ENCODE measurements at regions of chr22 and their contacts with region 1.

Region 1: GRCh38 chr22:29394931-29395581 is 6.7 kb upstream of the AP1B1 start:
- DNase-seq: peak; percentile 81
- ATAC-seq: peak; percentile 94
- H3K4me3 Mint-ChIP-seq: no peak overlapping the region
- H3K27ac Mint-ChIP-seq: no peak overlapping the region
- H3K4me1 Mint-ChIP-seq: peaks cover 18% of the 10 kb centered on the region
- H3K27me3 Mint-ChIP-seq: no peaks in the 10 kb centered on the region

Region 2: DNA sequence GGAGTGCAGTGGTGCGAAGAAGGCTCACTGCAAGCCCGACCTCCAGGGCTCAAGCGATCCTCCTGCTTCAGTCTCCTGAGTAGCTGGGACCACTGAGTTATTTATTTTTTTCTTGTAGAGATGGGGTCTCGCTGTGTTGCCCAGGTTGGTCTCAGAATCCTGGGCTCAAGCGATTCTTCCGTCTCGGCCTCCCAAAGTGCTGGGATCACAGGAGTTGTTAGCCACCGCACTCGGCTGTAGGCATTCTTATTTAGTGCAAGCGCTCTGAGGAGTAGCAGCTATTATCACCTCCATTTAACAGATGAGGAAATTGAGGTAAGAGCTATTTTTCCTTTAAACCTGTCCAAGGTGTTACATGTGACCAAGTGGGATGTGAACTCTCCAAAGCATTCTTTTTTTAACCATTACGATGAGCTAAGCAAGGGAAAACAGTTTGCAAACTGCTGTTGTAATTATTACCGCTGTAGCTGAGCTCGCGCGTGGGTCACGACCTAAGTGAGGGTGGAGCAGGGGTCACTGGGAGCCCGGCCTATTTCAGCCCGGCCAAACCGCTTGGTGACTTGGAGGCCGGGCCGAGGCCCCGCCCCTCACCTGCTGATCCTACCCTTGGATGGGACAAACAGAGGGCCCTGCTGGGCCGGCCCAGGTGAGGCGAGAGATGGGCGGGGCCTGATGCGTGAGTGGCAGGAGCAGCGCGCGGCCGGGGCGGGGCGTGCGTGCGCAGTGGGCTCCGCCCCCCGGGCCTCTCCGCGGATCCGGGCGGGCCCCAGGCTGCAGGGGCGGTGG is 322.7 kb before region 1 on chr22:
- CTCF ChIA-PET with region 1: no interaction called
- POLR2A ChIA-PET with region 1: no interaction called
- DNase-seq: peak; percentile 86
- ATAC-seq: peak; percentile 96
- H3K4me3 Mint-ChIP-seq: peak overlapping the region; percentile 48
- H3K27ac Mint-ChIP-seq: no peak overlapping the region
- H3K4me1 Mint-ChIP-seq: peaks cover 19% of the 10 kb centered on the region
- H3K27me3 Mint-ChIP-seq: peaks cover 70% of the 10 kb centered on the region

Region 3: GRCh38 chr22:29524440-29525191 is 129.6 kb after region 1 on chr22:
- CTCF ChIA-PET with region 1: interaction called, 13 read pairs
- POLR2A ChIA-PET with region 1: no interaction called
- DNase-seq: peak; percentile 47
- ATAC-seq: peak; percentile 58
- H3K4me3 Mint-ChIP-seq: no peak overlapping the region
- H3K27ac Mint-ChIP-seq: no peak overlapping the region
- H3K4me1 Mint-ChIP-seq: no peaks in the 10 kb centered on the region
- H3K27me3 Mint-ChIP-seq: no peaks in the 10 kb centered on the region

Measured in activated CD8-positive, alpha-beta T cell treated with anti-CD3 and anti-CD28 coated beads, Interleukin-2, amount 10 ng/mL, durations not matched to agents 7 days and 5 days (primary cell).